ENCODE measurements at regions of chr1 and their contacts with region 1.

Region 1: GRCh38 chr1:2205191-2205952 is 10.8 kb upstream of the FAAP20 start:
- DNase-seq: peak; percentile 91 to 97 (median 95)
- ATAC-seq: peak; percentile 93
- H3K4me3 ChIP-seq: peak overlapping the region; percentile 39 to 61
- H3K4me3 Mint-ChIP-seq: peak overlapping the region; percentile 69
- H3K27ac ChIP-seq: peak overlapping the region; percentile 19 to 47
- H3K27ac Mint-ChIP-seq: no peak overlapping the region
- H3K4me1 ChIP-seq: peaks cover 14% of the 10 kb centered on the region
- H3K4me1 Mint-ChIP-seq: peaks cover 8% of the 10 kb centered on the region
- H3K27me3 ChIP-seq: no peaks in the 10 kb centered on the region
- H3K27me3 Mint-ChIP-seq: no peaks in the 10 kb centered on the region
- CTCF ChIP-seq: no peak

Region 2: GRCh38 chr1:1919304-1920056 is 285.9 kb before region 1 on chr1:
- CTCF ChIA-PET with region 1: no interaction called
- POLR2A ChIA-PET with region 1: no interaction called
- intact Hi-C with region 1: loop called in 1 of 2 experiments (anchors 5 kb)
- DNase-seq: peak; percentile 97 to 100 (median 99)
- ATAC-seq: peak; percentile 89
- H3K4me3 ChIP-seq: peak overlapping the region; percentile 39 to 74
- H3K4me3 Mint-ChIP-seq: peak overlapping the region; percentile 47
- H3K27ac ChIP-seq: peak overlapping the region in 1 of 2 experiments; percentile 28
- H3K27ac Mint-ChIP-seq: peak overlapping the region; percentile 5
- H3K4me1 ChIP-seq: peaks cover 17% of the 10 kb centered on the region
- H3K4me1 Mint-ChIP-seq: peaks cover 3% of the 10 kb centered on the region
- H3K27me3 ChIP-seq: no peaks in the 10 kb centered on the region
- H3K27me3 Mint-ChIP-seq: no peaks in the 10 kb centered on the region
- CTCF ChIP-seq: no peak

Region 3: DNA sequence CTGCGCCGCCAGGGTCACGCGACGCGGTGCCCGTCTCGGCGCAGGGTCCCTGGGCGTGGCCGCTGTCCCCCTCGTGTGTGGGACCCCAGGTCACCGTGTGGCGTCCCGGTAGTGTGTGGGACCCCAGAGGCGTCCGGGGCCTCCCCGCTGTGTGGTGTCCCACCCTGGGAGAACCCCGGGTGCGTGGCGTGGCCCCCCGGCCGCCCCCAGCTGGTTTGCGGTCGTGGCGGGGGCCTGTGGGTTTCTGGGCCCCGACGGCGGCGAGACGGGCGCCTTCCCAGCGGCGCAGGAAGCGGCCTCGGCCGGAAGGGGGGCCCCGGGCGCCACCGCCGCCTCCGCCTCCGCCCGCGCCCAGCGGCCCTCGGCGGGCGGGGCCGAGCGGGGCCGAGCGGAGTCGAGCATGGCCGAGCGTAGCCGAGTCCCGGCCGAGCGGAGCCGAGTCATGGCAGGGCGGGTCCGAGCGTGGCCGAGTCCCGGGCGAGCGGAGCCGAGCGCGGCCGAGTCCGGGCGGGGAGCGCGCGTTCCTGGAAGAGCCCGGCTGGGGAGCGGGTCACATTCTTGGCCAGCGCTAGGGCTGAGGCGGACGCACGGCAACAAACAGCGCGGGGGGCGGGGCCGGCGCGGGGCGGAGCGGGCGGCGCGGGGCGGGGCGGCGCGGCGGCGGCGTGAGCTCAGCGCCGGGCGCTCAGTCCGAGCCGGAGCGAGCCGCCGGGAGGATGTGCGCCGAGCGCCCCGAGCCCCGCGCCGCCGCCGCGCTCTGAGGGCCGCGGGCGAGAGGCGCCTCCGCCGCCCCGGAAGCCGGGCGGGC is 22.2 kb after region 1 on chr1:
- CTCF ChIA-PET with region 1: interaction called, 3 read pairs
- POLR2A ChIA-PET with region 1: interaction called, 7 read pairs
- intact Hi-C with region 1: loop called (anchors 1 kb)
- DNase-seq: peak; percentile 88 to 97 (median 91)
- ATAC-seq: peak; percentile 70
- H3K4me3 ChIP-seq: peak overlapping the region in 1 of 2 experiments; percentile 24
- H3K4me3 Mint-ChIP-seq: peak overlapping the region; percentile 68
- H3K27ac ChIP-seq: peak overlapping the region in 1 of 2 experiments; percentile 66
- H3K27ac Mint-ChIP-seq: peak overlapping the region; percentile 74
- H3K4me1 ChIP-seq: peaks cover 24% of the 10 kb centered on the region
- H3K4me1 Mint-ChIP-seq: peaks cover 21% of the 10 kb centered on the region
- H3K27me3 ChIP-seq: no peaks in the 10 kb centered on the region
- H3K27me3 Mint-ChIP-seq: no peaks in the 10 kb centered on the region
- CTCF ChIP-seq: no peak

Region 4: DNA sequence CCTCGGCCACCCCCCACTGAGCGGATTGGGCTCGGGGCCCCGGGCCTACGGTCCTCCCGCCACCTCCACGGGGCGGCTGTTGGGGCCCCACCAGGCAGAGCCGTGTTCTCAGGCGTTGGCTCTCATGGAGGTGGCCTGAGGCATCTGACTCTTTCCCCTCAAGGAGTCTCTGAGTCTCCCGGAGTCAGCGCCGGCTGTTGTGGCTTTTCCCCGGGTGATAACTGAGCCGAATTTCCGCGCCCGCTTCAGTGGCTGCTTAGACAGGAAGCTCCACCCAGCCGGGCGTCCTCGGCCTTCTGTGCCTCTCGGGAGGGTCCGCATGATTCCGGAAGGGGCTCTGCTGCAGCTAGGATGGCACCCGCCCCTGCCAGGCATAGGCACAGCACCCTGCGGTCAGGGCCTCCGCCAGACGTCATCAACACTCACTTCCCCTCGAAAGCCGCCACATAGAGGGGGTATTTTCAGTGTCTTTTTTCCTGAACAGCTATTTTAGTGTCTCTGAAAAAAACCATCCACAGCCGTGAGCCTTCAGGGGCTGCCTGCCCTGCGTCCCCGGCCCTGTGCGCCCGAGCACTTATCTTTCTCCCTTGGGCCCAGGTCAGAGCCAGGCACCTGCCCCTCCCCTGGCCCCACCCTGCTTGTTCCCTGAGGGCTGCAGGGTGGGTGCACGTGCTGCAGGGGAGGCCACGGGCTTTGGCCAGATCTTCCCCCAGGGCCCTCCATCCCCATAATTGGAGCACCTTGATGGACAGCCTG is 95.7 kb after region 1 on chr1:
- CTCF ChIA-PET with region 1: no interaction called
- POLR2A ChIA-PET with region 1: interaction called, 4 read pairs
- intact Hi-C with region 1: loop called in 1 of 2 experiments (anchors 1 kb)
- DNase-seq: peak; percentile 86 to 99 (median 94)
- ATAC-seq: peak; percentile 75
- H3K4me3 ChIP-seq: peak overlapping the region; percentile 62 to 65
- H3K4me3 Mint-ChIP-seq: peak overlapping the region; percentile 82
- H3K27ac ChIP-seq: peak overlapping the region; percentile 99 to 100
- H3K27ac Mint-ChIP-seq: peak overlapping the region; percentile 98
- H3K4me1 ChIP-seq: peaks cover 62% of the 10 kb centered on the region
- H3K4me1 Mint-ChIP-seq: peaks cover 57% of the 10 kb centered on the region
- H3K27me3 ChIP-seq: no peaks in the 10 kb centered on the region
- H3K27me3 Mint-ChIP-seq: no peaks in the 10 kb centered on the region
- CTCF ChIP-seq: no peak

Region 5: GRCh38 chr1:2586154-2587070 is 381.0 kb after region 1 on chr1 and contains the start of gene PRXL2B:
- CTCF ChIA-PET with region 1: no interaction called
- POLR2A ChIA-PET with region 1: no interaction called
- intact Hi-C with region 1: loop called (anchors 1 to 2 kb)
- DNase-seq: peak; percentile 94 to 99 (median 97)
- ATAC-seq: peak; percentile 69
- H3K4me3 ChIP-seq: peak within 1 kb of the TSS; percentile 79 to 95
- H3K4me3 Mint-ChIP-seq: peak within 1 kb of the TSS; percentile 93
- H3K27ac ChIP-seq: peak within 1 kb of the TSS; percentile 95 to 98
- H3K27ac Mint-ChIP-seq: peak within 1 kb of the TSS; percentile 99
- H3K4me1 ChIP-seq: peaks cover 37% of the 10 kb centered on the region
- H3K4me1 Mint-ChIP-seq: peaks cover 40% of the 10 kb centered on the region
- H3K27me3 ChIP-seq: no peaks in the 10 kb centered on the region
- H3K27me3 Mint-ChIP-seq: no peaks in the 10 kb centered on the region
- CTCF ChIP-seq: no peak
- total RNA-seq, gene PRXL2B: 13.5 to 15.9 TPM

Region 6: DNA sequence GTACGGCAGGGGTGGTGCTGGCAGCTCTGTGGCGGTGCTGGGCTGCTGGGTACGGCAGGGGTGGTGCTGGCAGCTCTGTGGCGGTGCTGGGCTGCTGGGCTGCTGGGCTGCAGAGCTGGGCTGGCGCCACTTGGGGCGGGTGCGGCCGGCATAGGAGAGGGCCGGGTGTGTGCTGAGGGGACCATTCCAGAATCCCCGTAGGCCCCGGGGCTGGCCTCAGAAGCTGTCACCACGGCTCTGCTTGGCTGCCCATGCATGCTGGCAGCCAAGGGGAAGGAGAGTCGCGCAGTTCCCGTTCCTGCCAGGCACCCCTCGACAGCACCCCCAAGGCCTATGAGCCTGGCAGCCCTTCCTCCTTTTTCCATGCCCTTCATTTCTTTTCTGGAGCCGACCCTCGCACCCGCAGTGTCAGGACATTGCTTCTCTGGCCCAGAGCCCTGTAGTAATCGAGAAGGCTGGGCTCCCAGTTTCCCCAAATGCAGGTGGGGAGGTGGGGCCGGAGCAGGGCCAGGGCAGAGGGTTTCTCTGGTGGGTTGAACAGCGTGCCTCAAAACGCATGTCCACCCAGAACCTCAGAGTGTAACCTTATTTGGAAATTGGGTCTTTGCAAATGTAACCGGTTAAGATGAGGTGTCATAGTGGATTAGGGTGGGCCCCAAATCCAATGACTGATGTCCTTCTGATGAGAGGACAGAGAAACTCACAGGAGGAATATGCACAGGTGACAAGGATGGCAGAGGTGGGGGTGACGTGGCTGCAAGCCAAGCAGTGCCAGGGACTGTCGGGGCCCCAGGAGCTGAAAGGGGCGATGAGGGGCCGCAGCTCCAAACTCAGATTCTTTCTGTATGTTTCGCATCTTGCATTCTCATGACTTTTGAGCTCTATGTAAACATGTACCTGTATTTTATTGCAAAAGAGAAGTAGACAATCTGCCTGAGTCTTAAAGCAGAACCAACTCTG is 744.9 kb after region 1 on chr1:
- CTCF ChIA-PET with region 1: no interaction called
- POLR2A ChIA-PET with region 1: no interaction called
- intact Hi-C with region 1: no loop called
- DNase-seq: no peak
- ATAC-seq: no peak
- H3K4me3 ChIP-seq: no peak overlapping the region
- H3K4me3 Mint-ChIP-seq: no peak overlapping the region
- H3K27ac ChIP-seq: no peak overlapping the region
- H3K27ac Mint-ChIP-seq: no peak overlapping the region
- H3K4me1 ChIP-seq: no peaks in the 10 kb centered on the region
- H3K4me1 Mint-ChIP-seq: no peaks in the 10 kb centered on the region
- H3K27me3 ChIP-seq: no peaks in the 10 kb centered on the region
- H3K27me3 Mint-ChIP-seq: peaks cover 7% of the 10 kb centered on the region
- CTCF ChIP-seq: no peak

Measured in CD8-positive, alpha-beta T cell (primary cell).